ENCODE measurements at regions of chr10 and their contacts with region 1.

Region 1: GRCh38 chr10:28169525-28169924 is 133.3 kb downstream of the MPP7 start:
- DNase-seq: no peak

Region 2: GRCh38 chr10:28091913-28092312 is 77.6 kb before region 1 on chr10:
- intact Hi-C with region 1: loop called in 1 of 2 experiments (anchors 2 kb)
- DNase-seq: no peak

Region 3: GRCh38 chr10:28130267-28130666 is 39.3 kb before region 1 on chr10:
- intact Hi-C with region 1: no loop called
- DNase-seq: no peak

Region 4: DNA sequence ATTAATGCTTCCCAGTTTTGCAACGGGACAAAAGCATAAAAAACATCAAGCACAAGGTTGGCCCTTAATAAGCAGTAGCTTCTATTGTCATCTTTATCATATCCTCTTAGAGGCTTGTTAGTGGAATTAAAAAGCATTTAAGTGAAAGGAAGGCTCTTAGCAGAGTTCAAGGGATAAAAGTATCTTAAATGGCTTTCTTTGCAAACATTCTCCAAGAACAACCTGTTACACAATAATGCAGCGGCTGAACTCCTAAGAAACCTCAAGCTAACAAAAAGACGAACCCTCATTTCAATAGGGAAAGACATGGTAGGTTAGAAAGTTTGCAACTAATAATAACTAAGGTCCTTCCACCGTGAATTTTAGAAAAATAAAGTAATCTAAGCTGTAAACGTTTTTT is 51.3 kb after region 1 on chr10:
- intact Hi-C with region 1: no loop called
- DNase-seq: no peak